ENCODE measurements at regions of chr10 and their contacts with region 1.

Region 1: GRCh38 chr10:30027057-30028005 is 32.1 kb downstream of the JCAD start:
- DNase-seq: peak; percentile 73
- H3K4me3 ChIP-seq: no peak overlapping the region
- H3K27ac ChIP-seq: peak overlapping the region; percentile 78
- H3K4me1 ChIP-seq: peaks cover 44% of the 10 kb centered on the region
- H3K27me3 ChIP-seq: no peaks in the 10 kb centered on the region
- CTCF ChIP-seq: peak; percentile 14
- POLR2A ChIP-seq: peak; percentile 40

Region 2: DNA sequence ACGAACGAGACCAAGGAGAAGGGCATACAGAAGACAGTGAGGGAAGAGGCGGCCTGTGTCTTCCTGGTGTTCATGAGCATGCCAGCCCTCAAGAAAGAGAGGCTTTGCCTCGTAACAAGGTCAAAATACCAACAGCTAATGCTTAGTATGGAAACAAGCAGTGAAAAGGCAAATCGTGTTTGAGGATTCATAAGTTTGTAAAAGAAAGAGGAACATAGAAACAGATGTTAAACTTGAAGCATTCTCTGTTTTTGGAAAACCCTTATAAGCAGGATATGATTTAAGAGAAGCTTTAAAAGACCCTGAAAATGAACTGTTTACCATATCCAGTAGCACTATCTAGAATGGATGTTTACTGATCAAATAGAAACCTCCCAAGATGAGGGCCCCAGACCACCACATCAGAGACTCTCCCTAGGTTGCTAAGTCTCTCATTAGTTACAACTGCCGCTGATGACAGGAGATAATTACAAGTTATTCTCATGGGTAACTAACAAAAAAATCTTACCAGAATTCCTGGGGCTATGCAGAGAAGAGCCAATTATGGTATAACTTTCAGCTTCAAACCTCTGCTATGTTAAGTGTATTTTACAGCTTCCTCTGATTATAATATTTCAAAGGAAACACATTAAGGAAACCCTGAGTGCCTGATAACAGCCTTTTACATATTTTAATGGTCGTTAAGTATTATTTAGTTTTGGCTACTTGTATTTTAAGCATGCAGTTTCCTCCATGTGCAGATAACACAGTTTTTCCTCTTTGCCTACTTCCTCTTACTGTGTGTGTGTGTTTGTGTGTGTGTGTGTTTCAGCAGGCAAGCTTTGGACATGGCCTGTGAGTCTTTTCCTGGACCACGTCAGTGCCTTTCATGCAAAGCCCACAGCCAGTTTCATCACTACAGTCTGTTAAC is 14.1 kb after region 1 on chr10:
- CTCF ChIA-PET with region 1: interaction called, 33 read pairs
- POLR2A ChIA-PET with region 1: interaction called, 18 read pairs
- dilution Hi-C with region 1: no loop called
- intact Hi-C with region 1: loop called (anchors 1 kb)
- DNase-seq: peak; percentile 96
- H3K4me3 ChIP-seq: no peak overlapping the region
- H3K27ac ChIP-seq: peak overlapping the region; percentile 81
- H3K4me1 ChIP-seq: peaks cover 50% of the 10 kb centered on the region
- H3K27me3 ChIP-seq: no peaks in the 10 kb centered on the region
- CTCF ChIP-seq: no peak
- POLR2A ChIP-seq: peak; percentile 52